PC-3 (cell line): ENCODE measurements at regions of chr11 and their contacts with region 1.

Region 1: DNA sequence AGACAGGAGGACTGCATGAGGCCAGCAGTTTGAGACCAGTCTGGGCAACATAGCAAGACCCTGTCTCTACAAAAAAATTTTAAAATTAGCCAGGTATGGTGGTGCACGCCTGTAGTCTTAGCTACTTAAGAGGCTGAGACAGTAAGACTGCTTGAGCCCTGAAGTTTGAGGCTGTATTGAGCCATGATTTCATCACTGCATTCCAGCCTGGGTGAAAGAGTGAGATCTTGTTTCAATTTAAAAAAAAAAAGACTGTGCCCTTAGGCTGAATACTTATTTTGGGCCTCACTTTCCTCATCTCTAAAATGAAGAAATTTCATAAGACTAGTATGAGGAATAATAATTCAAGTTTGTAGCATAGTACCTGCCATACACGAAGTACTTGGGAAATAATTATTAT is 6.9 kb downstream of the AQP11 start:
- DNase-seq: peak; percentile 19
- ATAC-seq: no peak
- H3K4me3 ChIP-seq: no peak overlapping the region
- H3K27ac ChIP-seq: no peak overlapping the region
- H3K4me1 ChIP-seq: peaks cover 4% of the 10 kb centered on the region
- H3K27me3 ChIP-seq: no peaks in the 10 kb centered on the region
- CTCF ChIP-seq: no peak

Region 2: DNA sequence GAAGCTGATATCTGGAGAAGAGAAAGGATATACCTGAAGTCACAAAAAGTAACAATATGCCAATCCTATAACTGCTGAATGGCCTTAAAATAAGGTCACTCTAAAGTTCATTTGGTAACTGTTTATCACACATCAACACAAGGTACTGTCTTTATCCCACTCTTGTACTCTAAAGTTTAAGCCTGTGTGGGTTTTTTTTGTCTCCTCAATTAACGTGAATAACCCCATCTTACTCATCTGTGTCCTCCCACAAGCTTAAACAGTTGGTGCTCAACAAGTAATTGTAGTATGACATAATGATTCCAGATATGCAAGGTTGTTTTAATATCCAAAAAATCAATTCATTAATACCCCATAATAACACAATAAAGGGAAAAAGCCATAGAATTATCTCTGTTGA is 164.8 kb before region 1 on chr11:
- CTCF ChIA-PET with region 1: no interaction called
- POLR2A ChIA-PET with region 1: no interaction called
- intact Hi-C with region 1: no loop called
- DNase-seq: no peak
- ATAC-seq: no peak
- H3K4me3 ChIP-seq: no peak overlapping the region
- H3K27ac ChIP-seq: no peak overlapping the region
- H3K4me1 ChIP-seq: no peaks in the 10 kb centered on the region
- H3K27me3 ChIP-seq: no peaks in the 10 kb centered on the region; the same call in 1 of the 2 replicates
- CTCF ChIP-seq: no peak

Region 3: GRCh38 chr11:77506857-77507256 is 89.8 kb before region 1 on chr11:
- CTCF ChIA-PET with region 1: no interaction called
- POLR2A ChIA-PET with region 1: interaction called, 11 read pairs
- intact Hi-C with region 1: no loop called
- DNase-seq: peak; percentile 96
- ATAC-seq: peak; percentile 48
- H3K4me3 ChIP-seq: no peak overlapping the region
- H3K27ac ChIP-seq: no peak overlapping the region
- H3K4me1 ChIP-seq: peaks cover 33% of the 10 kb centered on the region
- H3K27me3 ChIP-seq: peaks cover 38% of the 10 kb centered on the region
- CTCF ChIP-seq: no peak